ENCODE measurements at regions of chr3 and their contacts with region 1.

Region 1: GRCh38 chr3:10142707-10143566 is 1.4 kb downstream of the VHL start:
- DNase-seq: no peak
- H3K4me3 ChIP-seq: peak overlapping the region; percentile 72
- H3K27ac ChIP-seq: no peak overlapping the region
- H3K4me1 ChIP-seq: no peaks in the 10 kb centered on the region
- H3K27me3 ChIP-seq: no peaks in the 10 kb centered on the region
- CTCF ChIP-seq: no peak

Region 2: DNA sequence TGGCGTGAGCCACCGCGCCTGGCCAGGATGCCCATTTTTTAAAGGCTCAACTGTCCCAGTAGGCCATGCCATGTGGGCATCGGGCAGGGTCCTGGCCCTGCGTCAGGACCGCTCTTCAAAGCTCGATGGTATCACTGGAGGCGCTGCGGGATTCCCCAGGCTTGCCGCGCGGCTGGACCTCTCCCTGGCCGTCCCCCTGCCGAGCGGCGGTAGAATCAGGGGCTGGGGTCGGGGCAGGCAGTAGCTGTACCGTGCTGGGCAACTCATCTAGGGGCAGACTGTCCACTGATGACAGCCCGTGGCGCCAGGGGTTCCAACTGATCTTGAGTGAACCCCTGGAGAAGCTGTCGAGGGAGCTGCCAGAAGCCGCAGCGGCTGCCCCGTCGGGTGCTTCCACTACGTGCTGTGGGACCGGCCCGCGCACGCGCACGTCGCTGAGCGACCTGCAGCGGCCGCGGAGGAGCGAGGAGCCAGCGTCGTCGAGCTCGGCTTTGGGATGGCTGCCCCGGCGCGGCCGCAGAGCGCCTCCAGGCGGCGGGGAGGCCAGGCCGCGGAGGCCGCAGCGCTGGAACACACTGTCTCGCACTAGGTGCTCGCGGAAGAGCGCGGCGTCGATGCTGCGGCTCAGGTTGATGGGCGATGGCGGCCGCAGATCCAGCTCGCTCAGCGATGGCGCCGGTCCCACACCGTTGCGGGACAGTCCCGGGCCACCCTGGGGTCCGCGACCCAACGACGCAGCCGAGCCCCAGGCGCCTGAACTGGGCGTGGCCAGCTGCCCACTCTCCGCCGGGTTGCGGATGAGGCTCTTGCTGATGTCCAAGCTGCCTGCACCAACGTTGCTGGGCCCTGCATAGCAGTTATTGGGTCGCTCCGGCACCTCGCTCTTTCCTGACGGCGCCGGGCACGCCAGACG is 196.6 kb before region 1 on chr3:
- intact Hi-C with region 1: no loop called
- DNase-seq: peak; percentile 86
- H3K4me3 ChIP-seq: peak overlapping the region; percentile 47
- H3K27ac ChIP-seq: peak overlapping the region; percentile 69
- H3K4me1 ChIP-seq: no peaks in the 10 kb centered on the region
- H3K27me3 ChIP-seq: no peaks in the 10 kb centered on the region
- CTCF ChIP-seq: peak; percentile 76

Region 3: DNA sequence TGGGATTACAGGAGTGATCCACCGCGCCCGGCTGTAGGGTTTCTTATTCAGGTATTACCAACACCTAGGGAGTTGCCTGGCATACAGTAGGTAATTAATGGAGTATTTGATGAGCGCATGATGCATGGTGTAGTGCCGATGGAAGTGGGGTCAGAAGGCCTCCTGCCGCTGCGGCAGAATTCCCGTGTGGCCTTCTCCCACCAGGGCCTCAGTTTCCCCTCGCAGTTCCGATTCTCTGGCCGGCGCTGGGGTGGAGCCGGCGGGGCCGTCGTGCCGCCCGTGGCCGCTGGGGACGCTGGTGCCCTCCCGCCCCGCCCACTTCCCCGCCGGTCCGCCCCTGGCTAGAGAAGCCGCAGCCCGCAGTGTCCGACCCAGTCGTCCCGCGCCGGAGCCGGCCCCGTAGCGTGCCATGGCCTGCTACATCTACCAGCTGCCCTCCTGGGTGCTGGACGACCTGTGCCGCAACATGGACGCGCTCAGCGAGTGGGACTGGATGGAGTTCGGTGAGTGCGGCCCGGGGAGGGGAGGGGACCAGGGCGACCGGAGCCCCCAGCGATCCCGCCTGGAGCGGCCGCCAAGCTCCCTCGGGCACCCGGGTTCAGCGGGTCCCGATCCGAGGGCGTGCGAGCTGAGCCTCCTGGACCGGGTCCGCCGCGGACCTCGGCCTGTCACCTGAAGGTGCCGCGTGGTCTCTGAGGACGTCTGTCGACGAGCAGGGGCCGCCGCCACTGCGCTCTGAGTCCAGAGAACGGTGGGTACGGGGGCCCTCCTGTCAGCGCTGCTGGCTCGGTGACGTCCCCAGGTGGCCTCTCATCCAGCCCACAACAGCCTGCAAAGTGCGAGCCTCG is 21.8 kb after region 1 on chr3 and contains the start of gene IRAK2:
- intact Hi-C with region 1: loop called (anchors 2 kb)
- DNase-seq: peak; percentile 77
- H3K4me3 ChIP-seq: peak within 1 kb of the TSS; percentile 80
- H3K27ac ChIP-seq: peak within 1 kb of the TSS; percentile 45
- H3K4me1 ChIP-seq: no peaks in the 10 kb centered on the region
- H3K27me3 ChIP-seq: no peaks in the 10 kb centered on the region
- CTCF ChIP-seq: peak; percentile 98
- total RNA-seq, gene IRAK2: 1.0 to 2.6 TPM